Mammary epithelial cell (primary cell): ENCODE measurements at regions of chr19 and their contacts with region 1.

Region 1: DNA sequence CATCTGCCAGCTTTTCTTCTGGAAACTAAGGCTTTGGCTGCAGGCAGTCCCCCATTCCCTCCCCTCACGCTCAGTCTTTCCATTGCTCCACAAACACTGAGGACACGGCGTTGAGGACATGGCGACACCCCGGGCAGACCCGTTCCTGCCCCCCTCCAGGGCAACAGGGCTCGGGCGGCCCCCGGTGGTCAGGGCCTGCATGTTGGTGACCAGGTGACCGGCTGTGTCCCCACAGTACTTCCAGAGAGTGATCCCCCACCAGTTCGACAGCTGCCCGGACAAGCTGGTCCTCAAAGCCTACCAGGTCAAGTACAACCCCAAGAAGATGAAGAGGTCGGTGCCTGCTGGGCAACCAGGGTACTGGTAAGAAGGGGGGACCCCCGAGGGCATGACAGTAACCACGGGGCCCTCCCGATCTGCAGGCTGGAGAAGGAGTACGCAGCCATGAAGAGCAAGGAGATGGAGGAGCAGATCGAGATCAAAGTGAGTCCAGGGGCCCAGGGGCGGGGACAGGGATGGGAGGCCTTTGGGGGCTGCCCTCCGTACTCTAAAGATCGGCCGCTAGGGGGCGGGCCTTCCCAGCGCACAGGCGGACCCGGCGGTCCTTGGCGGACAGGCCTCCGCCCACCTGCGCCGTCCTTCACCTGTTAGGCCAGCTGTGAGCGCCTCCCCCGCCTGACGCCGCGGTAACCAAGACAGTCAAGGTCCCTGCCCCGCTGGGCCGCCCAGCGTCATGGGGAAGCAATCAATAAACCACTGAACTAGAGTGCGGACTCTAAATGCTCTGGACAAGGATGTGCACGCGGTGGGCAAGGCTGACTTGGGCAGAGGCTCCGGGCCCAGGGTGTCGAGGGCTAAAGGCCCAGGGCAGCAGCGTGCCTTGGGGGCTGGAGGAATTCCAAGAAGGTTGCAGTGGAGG is 21.1 kb downstream of the PRR36 start:
- DNase-seq: peak; percentile 63
- H3K4me3 ChIP-seq: no peak overlapping the region
- H3K27ac ChIP-seq: no peak overlapping the region
- H3K4me1 ChIP-seq: peaks cover 4% of the 10 kb centered on the region
- H3K27me3 ChIP-seq: no peaks in the 10 kb centered on the region
- CTCF ChIP-seq: peak; percentile 55 to 85

Region 2: DNA sequence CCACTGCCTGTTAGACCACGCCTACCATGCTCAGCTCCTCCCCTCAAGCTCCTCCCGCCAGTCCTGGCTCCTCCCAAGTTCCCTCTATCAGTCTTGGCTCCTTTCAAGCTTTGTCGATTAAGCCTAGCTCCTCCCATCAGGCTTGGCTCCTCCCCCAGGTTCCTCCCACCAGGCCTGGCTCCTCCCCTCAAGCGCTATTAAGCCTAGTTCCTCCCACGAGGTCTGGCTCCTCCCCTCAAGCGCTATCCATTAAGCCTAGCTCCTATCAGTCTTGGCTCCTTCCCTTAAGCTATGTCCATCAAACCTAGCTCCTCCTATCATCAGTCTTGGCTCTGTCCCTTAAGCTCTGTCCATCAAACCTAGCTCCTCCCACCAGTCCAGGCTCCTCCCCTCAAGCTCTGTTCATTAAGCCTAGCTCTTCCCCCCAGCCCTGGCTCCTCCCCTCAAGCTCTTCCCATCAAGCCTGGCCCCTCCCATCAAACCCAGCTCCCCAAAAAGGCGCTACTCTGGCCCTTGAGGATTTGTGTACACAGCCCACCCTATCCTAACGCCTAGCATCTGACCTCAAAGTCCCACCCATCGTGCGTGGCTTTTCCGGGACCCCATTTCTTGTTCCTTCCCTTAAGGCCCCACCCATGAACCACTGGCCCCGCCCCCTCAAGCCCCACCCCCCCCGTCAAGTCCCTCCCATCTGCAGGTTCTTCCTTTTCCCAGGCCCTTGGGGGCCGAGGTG is 247.5 kb before region 1 on chr19:
- CTCF ChIA-PET with region 1: no interaction called
- dilution Hi-C with region 1: loop called (anchors 5 kb)
- in situ Hi-C with region 1: no loop called
- intact Hi-C with region 1: no loop called
- DNase-seq: peak; percentile 16
- H3K4me3 ChIP-seq: no peak overlapping the region
- H3K27ac ChIP-seq: no peak overlapping the region
- H3K4me1 ChIP-seq: no peaks in the 10 kb centered on the region
- H3K27me3 ChIP-seq: no peaks in the 10 kb centered on the region
- CTCF ChIP-seq: no peak

Region 3: GRCh38 chr19:7748770-7749209 is 104.3 kb before region 1 on chr19:
- CTCF ChIA-PET with region 1: no interaction called
- dilution Hi-C with region 1: no loop called
- in situ Hi-C with region 1: no loop called
- intact Hi-C with region 1: no loop called
- DNase-seq: peak; percentile 48
- H3K4me3 ChIP-seq: no peak overlapping the region
- H3K27ac ChIP-seq: no peak overlapping the region
- H3K4me1 ChIP-seq: no peaks in the 10 kb centered on the region
- H3K27me3 ChIP-seq: no peaks in the 10 kb centered on the region
- CTCF ChIP-seq: peak; percentile 2 to 52

Region 4: DNA sequence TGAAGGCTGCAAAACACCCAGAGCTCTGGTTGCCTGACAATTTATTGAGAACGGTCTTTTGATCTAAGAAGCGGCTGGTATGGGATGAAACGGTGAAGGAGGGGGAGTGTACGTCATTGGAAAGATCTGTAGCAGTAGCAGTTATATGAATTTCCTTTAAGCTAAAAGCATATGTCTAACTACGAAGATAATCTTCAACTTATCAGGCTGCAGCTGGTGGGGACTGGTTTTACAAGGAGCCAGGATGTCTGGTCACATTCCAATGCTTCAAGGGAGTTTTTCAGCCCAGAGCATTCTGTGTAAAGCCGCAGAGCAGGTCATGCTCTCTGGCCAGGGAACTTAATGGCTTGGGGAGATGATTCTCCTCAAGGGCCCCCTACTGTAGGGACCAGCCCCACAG is 60.9 kb before region 1 on chr19:
- CTCF ChIA-PET with region 1: no interaction called
- dilution Hi-C with region 1: loop called (anchors 5 kb)
- in situ Hi-C with region 1: no loop called
- intact Hi-C with region 1: no loop called
- DNase-seq: peak; percentile 17
- H3K4me3 ChIP-seq: no peak overlapping the region
- H3K27ac ChIP-seq: no peak overlapping the region
- H3K4me1 ChIP-seq: no peaks in the 10 kb centered on the region
- H3K27me3 ChIP-seq: peaks cover 17% of the 10 kb centered on the region
- CTCF ChIP-seq: no peak

Region 5: GRCh38 chr19:7903244-7904073 is 50.3 kb after region 1 on chr19 and contains the start of gene MAP2K7:
- CTCF ChIA-PET with region 1: interaction called, 3 read pairs
- dilution Hi-C with region 1: no loop called
- in situ Hi-C with region 1: no loop called
- intact Hi-C with region 1: loop called (anchors 1 kb)
- DNase-seq: peak; percentile 99
- H3K4me3 ChIP-seq: peak within 1 kb of the TSS; percentile 69 to 96 (median 73)
- H3K27ac ChIP-seq: peak within 1 kb of the TSS; percentile 68
- H3K4me1 ChIP-seq: peaks cover 19% of the 10 kb centered on the region
- H3K27me3 ChIP-seq: no peaks in the 10 kb centered on the region
- CTCF ChIP-seq: peak; percentile 43 to 60
- total RNA-seq, gene MAP2K7: 11.3 to 33.3 TPM

Region 6: DNA sequence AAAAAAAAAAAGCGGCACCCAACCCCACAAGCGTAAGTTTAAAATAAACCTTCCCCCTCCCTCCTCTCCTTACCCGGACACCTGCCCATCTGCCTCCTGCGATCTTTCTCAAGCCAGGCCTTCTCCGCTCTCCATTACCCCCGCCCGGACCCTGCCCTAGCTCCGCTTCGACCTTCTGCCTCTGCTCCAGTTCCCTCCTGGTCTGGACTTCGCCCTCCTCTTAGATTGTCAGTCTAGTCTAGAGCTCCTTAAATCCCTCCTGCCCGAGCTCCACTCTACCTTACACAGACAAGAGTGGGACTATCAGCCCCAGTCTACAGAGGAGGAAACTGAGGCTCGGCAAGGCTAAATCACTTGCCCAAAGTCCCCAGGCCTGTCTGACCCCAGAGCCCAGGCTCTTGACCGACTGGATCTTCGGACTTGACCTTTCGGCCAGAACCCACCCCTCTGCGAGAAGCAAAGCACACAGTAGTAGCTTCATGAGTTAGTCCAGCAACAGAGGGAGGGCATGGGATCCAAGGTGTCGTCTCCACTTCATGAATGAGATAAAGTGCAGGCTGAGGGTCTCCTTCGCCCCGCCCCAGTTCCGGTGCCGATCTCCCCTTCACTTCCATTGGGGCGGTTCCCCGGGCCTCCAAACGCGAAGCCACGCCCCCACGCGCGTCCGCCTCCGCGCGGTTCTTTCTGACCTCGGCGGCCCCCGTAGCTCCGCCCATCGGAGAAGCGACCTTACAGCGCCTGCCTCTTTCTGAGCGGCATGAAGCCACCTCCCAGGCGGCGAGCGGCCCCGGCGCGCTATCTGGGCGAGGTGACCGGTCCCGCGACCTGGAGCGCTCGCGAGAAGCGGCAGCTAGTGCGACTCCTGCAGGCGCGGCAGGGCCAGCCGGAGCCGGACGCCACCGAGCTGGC is 66.8 kb after region 1 on chr19 and contains the start of gene SNAPC2:
- CTCF ChIA-PET with region 1: interaction called, 8 read pairs
- dilution Hi-C with region 1: loop called (anchors 5 kb)
- in situ Hi-C with region 1: no loop called
- intact Hi-C with region 1: loop called (anchors 1 kb)
- DNase-seq: peak; percentile 90
- H3K4me3 ChIP-seq: peak within 1 kb of the TSS; percentile 76 to 86 (median 79)
- H3K27ac ChIP-seq: peak within 1 kb of the TSS; percentile 52
- H3K4me1 ChIP-seq: peaks cover 32% of the 10 kb centered on the region
- H3K27me3 ChIP-seq: peaks cover 14% of the 10 kb centered on the region
- CTCF ChIP-seq: peak in 1 of 2 donors; percentile 3
- total RNA-seq, gene SNAPC2: 11.2 to 27.2 TPM

Region 7: DNA sequence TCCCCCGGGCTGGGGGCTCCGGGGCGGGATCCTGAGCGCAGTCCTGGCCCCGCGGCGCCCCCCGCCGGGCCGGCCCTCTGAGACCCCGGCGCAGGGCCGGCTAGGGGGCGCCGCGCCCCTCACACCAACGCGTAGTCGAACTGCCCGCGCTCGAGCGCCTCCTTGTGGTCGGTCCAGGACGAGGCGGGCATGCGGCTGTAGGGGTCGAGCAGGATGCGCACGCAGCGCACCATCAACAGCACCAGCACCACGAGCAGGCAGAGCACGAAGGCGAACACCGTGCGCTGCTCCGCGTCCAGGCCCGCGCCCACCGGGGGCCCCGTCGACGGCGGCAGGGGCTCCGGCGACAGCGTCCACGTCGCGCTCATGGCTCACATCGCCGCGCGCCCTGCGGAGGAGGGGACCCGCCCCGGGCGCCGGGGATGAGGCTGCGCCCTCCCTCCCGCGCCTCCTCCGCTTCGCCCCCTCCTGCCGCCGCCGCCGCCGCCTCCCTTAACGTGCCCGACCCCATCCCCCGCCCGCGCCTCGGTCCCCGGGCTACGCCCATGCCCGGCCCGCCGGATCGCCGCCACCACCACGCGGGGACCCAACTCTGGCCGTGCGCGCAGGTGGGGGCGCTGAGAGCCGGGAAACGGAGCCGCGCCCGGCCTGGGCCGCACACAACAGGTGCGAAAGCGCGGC is 72.2 kb after region 1 on chr19:
- CTCF ChIA-PET with region 1: interaction called, 8 read pairs
- dilution Hi-C with region 1: loop called (anchors 5 kb)
- in situ Hi-C with region 1: no loop called
- intact Hi-C with region 1: loop called (anchors 1 kb)
- DNase-seq: no peak
- H3K4me3 ChIP-seq: peak overlapping the region in 2 of 3 experiments; percentile 37 to 42
- H3K27ac ChIP-seq: no peak overlapping the region
- H3K4me1 ChIP-seq: peaks cover 53% of the 10 kb centered on the region
- H3K27me3 ChIP-seq: no peaks in the 10 kb centered on the region
- CTCF ChIP-seq: peak; percentile 64 to 77

Region 8: GRCh38 chr19:8252922-8253589 is 399.9 kb after region 1 on chr19:
- CTCF ChIA-PET with region 1: no interaction called
- dilution Hi-C with region 1: no loop called
- in situ Hi-C with region 1: no loop called
- intact Hi-C with region 1: loop called (anchors 10 kb)
- DNase-seq: peak; percentile 54
- H3K4me3 ChIP-seq: no peak overlapping the region
- H3K27ac ChIP-seq: no peak overlapping the region
- H3K4me1 ChIP-seq: peaks cover 3% of the 10 kb centered on the region
- H3K27me3 ChIP-seq: no peaks in the 10 kb centered on the region
- CTCF ChIP-seq: peak; percentile 82 to 94